ENCODE measurements at regions of chr17 and their contacts with region 1.

Region 1: GRCh38 chr17:29116804-29117772 is 63.1 kb downstream of the MYO18A start:
- DNase-seq: peak; percentile 80
- H3K4me3 Mint-ChIP-seq: no peak overlapping the region
- H3K27ac Mint-ChIP-seq: no peak overlapping the region
- H3K4me1 Mint-ChIP-seq: peaks cover 4% of the 10 kb centered on the region
- H3K27me3 Mint-ChIP-seq: no peaks in the 10 kb centered on the region

Region 2: DNA sequence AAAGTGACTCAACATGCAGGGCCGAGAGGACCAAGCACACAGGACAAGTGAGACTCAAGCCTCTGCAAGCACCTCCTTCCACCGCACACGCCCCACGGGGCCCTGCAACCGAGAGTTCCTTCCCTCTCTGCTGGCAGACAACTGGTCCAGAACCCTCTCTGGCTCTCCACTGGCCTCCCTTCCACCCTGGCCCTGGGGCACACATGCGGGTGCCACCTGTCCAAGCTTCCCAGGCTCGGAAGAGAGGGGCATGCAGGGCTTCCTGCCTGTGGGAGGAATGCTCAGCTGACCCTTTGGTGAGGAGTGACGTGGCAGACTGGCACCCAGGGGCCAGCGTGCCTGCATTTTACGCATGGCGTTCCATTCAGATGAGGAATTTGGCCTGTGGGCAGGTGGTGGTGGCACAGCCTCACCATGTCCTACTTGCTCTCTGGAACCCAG is 14.3 kb before region 1 on chr17:
- CTCF ChIA-PET with region 1: interaction called, 14 read pairs
- POLR2A ChIA-PET with region 1: no interaction called
- DNase-seq: no peak
- H3K4me3 Mint-ChIP-seq: no peak overlapping the region
- H3K27ac Mint-ChIP-seq: no peak overlapping the region
- H3K4me1 Mint-ChIP-seq: no peaks in the 10 kb centered on the region
- H3K27me3 Mint-ChIP-seq: no peaks in the 10 kb centered on the region

Region 3: DNA sequence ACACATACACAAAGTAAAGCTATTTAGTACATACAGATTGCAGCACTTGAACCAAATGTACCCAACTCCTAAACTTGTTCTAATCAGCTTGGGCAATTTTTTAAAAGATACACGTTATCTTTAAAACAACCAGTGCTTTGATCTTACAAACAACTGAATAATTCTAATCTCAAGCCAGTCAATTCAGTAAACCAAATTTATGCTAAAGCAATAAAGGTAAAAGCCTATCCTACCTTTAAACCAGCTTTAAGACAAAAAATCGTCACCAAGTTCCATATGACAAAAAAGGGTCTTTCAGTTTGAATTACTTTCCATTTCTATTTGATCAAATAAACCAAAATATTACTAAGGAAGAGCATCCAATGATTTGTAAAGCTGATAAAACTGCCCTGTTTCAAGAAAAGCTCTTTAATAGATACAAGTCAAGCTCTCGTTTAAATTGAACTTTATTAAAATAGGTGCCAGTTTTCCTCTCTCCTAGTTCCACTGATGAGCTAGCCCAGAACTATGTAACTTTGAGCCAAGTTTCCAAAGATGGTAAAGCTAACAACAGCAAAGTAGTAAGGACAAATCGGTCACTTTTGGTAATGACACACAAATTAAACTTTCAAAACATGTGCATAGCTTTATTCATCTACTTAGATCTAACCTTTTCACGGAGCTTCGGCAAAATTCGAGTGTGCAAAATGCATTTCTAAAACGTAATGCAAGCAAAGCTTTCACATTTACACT is 139.8 kb after region 1 on chr17:
- CTCF ChIA-PET with region 1: interaction called, 12 read pairs
- POLR2A ChIA-PET with region 1: no interaction called
- DNase-seq: no peak
- H3K4me3 Mint-ChIP-seq: no peak overlapping the region
- H3K27ac Mint-ChIP-seq: no peak overlapping the region
- H3K4me1 Mint-ChIP-seq: peaks cover 21% of the 10 kb centered on the region
- H3K27me3 Mint-ChIP-seq: no peaks in the 10 kb centered on the region